Endothelial cell of umbilical vein (primary cell): ENCODE measurements at regions of chr9 and their contacts with region 1.

Region 1: DNA sequence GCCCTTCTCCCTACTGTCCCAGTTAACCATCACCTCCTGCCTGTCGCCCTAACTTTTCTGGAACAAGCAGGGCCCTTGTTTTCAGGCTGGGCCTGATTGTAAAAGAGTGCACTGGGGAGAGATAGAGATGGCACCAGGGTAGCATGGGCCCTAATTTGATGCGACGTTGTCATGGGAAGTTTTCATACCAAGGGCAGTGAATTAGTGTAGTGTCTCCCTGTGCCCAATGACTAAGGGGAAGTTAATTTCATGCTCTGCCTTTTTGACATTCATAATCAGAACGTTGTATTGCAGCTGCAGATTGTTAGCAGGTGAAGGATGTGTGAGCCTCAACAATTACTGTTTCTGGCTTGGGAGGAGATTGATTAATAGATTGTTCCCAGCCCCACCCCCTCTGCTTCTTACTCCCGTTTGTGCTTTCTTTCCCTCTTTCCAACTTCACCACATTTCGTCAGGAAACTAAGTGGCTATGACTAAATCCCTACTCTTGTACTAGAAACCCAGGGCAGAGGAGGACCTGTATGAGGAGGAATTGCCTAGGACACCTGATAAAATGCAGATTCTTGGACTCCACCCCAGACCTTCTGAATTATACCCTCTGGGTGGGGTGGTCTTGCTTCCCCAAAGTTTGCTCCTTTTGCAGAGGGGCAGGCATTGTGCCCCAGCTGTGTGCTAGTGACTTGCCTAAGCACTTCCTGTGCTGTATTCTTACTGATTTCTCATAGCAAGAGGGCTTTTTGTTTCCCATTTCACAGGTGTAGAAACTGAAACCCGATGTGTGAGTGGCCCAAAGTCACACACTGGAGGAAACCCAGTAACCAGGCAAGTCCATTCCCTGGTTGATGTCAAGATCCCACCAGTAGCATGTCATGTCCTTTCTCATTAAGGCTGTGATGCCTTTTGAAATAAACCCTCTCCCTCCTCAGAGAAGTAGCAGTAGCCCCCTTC is 56.3 kb downstream of the DAB2IP start:
- DNase-seq: no peak
- H3K4me3 ChIP-seq: no peak overlapping the region
- H3K27ac ChIP-seq: no peak overlapping the region
- H3K4me1 ChIP-seq: no peaks in the 10 kb centered on the region
- H3K27me3 ChIP-seq: no peaks in the 10 kb centered on the region
- CTCF ChIP-seq: no peak
- POLR2A ChIP-seq: no peak

Region 2: GRCh38 chr9:121013911-121014310 is 693.8 kb before region 1 on chr9:
- CTCF ChIA-PET with region 1: no interaction called
- POLR2A ChIA-PET with region 1: no interaction called
- dilution Hi-C with region 1: no loop called
- intact Hi-C with region 1: no loop called
- DNase-seq: no peak
- H3K4me3 ChIP-seq: no peak overlapping the region
- H3K27ac ChIP-seq: no peak overlapping the region
- H3K4me1 ChIP-seq: no peaks in the 10 kb centered on the region
- H3K27me3 ChIP-seq: no peaks in the 10 kb centered on the region
- CTCF ChIP-seq: no peak
- POLR2A ChIP-seq: no peak

Region 3: GRCh38 chr9:121249563-121249962 is 458.2 kb before region 1 on chr9:
- CTCF ChIA-PET with region 1: no interaction called
- POLR2A ChIA-PET with region 1: no interaction called
- dilution Hi-C with region 1: no loop called
- intact Hi-C with region 1: no loop called
- DNase-seq: no peak
- H3K4me3 ChIP-seq: no peak overlapping the region
- H3K27ac ChIP-seq: no peak overlapping the region
- H3K4me1 ChIP-seq: no peaks in the 10 kb centered on the region
- H3K27me3 ChIP-seq: peaks cover 13 to 14% of the 10 kb centered on the region in 2 experiments
- CTCF ChIP-seq: no peak
- POLR2A ChIP-seq: no peak

Region 4: DNA sequence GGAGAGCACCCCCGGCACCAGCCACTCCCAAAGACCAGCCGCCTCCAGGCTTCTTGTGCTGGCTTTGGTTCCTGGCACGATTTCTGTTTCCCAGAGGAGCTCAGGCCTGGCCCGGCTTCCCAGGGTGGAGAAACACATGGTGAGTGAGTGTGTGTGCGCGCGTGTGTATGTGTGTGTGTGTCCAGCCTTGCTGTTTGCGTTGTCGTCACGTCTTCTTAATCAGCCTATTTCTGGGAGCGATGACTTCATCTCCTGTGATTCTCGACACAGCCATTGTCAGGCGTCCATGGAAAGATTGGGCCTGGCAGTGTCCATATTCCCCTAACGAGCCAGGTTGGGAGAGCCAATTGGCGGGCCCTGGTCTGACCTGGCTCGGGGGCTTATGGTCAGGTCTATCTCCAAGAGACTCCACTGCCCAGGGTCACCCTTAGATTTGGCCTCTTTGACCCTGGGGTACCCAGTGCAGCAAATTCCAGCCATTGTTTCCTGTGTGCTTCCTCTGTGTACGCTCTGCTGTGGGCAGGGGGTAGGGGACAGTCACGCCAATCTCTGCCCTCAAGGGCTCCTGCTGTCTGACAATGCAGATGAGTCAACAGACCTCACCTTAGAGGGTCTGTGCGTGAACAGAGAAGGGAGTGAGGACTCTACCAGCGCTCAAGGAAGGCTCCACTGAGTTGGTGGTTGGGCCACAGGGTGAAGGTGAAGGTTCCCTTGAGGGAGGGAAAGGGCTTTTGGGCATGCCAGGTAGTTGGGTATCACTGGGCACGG is 17.4 kb after region 1 on chr9:
- CTCF ChIA-PET with region 1: no interaction called
- POLR2A ChIA-PET with region 1: no interaction called
- dilution Hi-C with region 1: no loop called
- intact Hi-C with region 1: loop called (anchors 1 kb)
- DNase-seq: peak; percentile 97
- H3K4me3 ChIP-seq: no peak overlapping the region
- H3K27ac ChIP-seq: peak overlapping the region; percentile 71
- H3K4me1 ChIP-seq: peaks cover 23% of the 10 kb centered on the region
- H3K27me3 ChIP-seq: no peaks in the 10 kb centered on the region
- CTCF ChIP-seq: no peak
- POLR2A ChIP-seq: no peak